Activated CD4-positive, alpha-beta memory T cell treated with anti-CD3 and anti-CD28 coated beads for 36 hours (primary cell): ENCODE measurements at regions of chr12 and their contacts with region 1.

Region 1: GRCh38 chr12:48851883-48852733 is at the start of gene DDX23:
- DNase-seq: peak; percentile 96
- H3K4me3 Mint-ChIP-seq: peak within 1 kb of the TSS; percentile 97
- H3K27ac Mint-ChIP-seq: peak within 1 kb of the TSS; percentile 97
- H3K4me1 Mint-ChIP-seq: peaks cover 31% of the 10 kb centered on the region
- H3K27me3 Mint-ChIP-seq: no peaks in the 10 kb centered on the region
- total RNA-seq, gene DDX23: 119 to 121 TPM

Region 2: DNA sequence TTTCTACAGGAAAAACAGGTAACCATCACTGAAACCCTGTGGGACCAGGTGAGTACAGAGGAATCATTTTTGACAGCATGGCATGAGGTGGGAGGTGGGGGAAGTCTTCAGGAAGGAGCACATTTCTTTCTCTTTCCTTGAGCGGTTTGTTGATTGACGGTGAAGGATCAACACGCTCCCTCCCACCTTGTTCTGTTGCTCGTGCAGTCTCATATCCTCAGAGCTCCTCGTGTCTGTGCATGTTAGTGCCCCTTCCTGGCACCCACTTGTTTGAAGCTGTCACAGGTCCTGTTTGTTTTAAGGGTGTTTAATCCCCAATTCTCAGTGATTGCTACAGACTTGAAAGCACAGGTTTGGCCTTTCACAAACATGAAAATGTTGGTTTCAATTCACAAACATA is 365.4 kb before region 1 on chr12:
- CTCF ChIA-PET with region 1: no interaction called
- POLR2A ChIA-PET with region 1: no interaction called
- intact Hi-C with region 1: no loop called
- DNase-seq: no peak
- H3K4me3 Mint-ChIP-seq: no peak overlapping the region
- H3K27ac Mint-ChIP-seq: no peak overlapping the region
- H3K4me1 Mint-ChIP-seq: no peaks in the 10 kb centered on the region
- H3K27me3 Mint-ChIP-seq: peaks cover 9% of the 10 kb centered on the region

Region 3: DNA sequence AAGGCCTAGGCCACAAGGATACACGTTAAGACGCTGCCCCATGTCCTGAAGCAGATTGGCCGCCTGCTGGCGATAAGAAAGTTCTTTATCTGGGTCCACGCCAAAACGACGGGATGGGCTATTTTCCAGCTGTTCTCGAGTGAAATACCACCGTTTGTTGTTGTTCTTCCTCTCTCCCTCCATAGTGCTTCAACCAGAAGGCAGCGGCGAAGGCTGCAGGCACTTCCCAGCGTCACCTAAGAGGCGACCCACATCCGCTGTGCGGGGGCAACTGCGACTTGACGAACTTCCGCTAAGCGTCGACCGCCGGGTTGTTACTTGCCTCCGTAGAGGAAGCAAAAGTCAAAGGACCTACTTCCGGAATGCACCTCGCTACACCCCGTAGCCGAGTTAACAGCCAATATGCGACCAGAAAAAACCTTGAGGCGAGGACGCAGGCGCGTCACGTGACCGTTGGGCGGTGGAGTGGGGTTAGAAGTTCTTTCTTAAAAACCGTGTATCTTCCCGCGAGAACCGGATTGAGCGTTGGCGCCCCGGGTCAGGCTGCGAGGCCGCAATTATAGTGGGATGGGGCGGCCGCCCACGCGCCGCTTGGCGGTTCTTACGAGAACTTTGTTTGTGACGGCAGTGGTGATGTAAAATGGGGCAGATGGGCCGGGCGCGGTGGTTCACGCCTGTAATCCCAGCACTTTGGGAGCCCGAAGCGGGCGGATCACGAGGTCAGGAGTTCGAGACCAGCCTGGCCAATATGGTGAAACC is 135.4 kb before region 1 on chr12 and contains the start of gene CCNT1:
- CTCF ChIA-PET with region 1: no interaction called
- POLR2A ChIA-PET with region 1: interaction called, 3 read pairs
- intact Hi-C with region 1: loop called (anchors 1 kb)
- DNase-seq: peak; percentile 100
- H3K4me3 Mint-ChIP-seq: peak within 1 kb of the TSS; percentile 98
- H3K27ac Mint-ChIP-seq: peak within 1 kb of the TSS; percentile 99
- H3K4me1 Mint-ChIP-seq: peaks cover 39% of the 10 kb centered on the region
- H3K27me3 Mint-ChIP-seq: no peaks in the 10 kb centered on the region
- total RNA-seq, gene CCNT1: 66.2 to 73.3 TPM

Region 4: GRCh38 chr12:48873096-48873495 is 21.0 kb after region 1 on chr12:
- CTCF ChIA-PET with region 1: interaction called, 106 read pairs
- POLR2A ChIA-PET with region 1: no interaction called
- intact Hi-C with region 1: no loop called
- DNase-seq: no peak
- H3K4me3 Mint-ChIP-seq: no peak overlapping the region
- H3K27ac Mint-ChIP-seq: no peak overlapping the region
- H3K4me1 Mint-ChIP-seq: no peaks in the 10 kb centered on the region
- H3K27me3 Mint-ChIP-seq: no peaks in the 10 kb centered on the region

Region 5: DNA sequence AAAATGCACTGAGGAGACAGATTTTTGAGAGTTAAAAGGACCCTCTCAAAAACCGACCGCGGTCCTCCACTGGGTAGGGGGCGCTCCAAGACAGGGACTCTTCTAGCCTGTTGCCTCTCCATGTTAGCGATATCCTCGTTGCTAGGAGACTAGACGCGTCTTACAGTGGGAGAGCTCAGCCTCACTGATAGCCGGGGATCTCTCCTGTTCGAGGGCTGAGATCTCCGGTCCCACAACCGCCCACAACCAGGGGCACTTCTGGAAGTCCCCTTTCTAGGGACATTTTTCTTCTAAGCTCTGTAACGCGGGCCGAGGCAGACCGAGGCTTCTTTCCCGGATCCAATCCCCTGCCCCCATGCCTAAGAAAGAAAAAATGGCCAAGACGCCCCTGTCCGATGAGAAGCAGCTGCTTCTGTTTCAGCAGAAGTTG is 51.9 kb after region 1 on chr12:
- CTCF ChIA-PET with region 1: interaction called, 68 read pairs
- POLR2A ChIA-PET with region 1: interaction called, 3 read pairs
- intact Hi-C with region 1: no loop called
- DNase-seq: peak; percentile 89
- H3K4me3 Mint-ChIP-seq: peak overlapping the region; percentile 70
- H3K27ac Mint-ChIP-seq: no peak overlapping the region
- H3K4me1 Mint-ChIP-seq: peaks cover 2% of the 10 kb centered on the region
- H3K27me3 Mint-ChIP-seq: no peaks in the 10 kb centered on the region

Region 6: DNA sequence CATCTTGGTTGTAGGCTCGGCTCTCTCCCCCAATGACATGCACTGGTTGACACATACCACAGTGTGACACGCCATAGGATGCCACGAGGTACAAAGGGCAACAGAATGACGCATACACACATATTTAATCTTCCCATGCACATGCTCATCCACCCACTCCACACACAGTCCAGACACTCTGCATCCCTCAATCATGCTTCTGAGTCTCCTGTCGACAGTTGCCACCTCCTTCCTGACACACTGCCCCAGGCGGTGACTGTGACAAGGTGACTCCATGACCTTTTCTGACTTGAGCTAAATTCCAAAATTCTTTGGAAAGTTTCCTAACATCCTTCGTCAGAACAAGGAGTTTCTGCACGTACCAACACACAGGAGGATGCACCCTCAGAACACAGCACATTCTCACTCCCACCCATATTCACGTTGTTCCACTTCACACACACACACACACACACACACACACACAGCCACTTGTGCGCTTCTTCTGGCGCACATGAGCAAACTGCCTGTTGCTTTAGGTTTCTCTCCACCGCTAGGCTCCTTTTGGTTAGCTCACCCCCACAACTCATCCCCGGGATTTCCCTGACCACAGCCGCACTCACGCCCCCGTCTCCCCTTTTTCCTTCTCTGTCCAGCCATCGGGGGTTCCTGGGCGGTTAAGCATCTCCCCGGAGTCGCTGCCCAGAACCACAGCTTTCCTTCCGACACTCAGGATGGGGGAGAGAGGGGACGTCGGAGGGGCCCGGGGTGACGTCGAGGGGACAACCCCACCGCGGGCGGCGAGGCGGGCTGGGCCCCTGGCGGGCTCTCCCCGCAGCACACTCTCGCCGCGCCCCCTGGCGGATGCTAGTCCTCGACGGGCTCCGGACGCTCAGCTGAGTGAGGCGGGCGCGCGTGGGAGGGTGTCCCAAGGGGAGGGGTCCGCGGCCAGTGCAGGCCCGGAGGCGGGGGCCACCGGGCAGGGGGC is 125.5 kb after region 1 on chr12:
- CTCF ChIA-PET with region 1: interaction called, 45 read pairs
- POLR2A ChIA-PET with region 1: interaction called, 7 read pairs
- intact Hi-C with region 1: loop called (anchors 1 kb)
- DNase-seq: peak; percentile 87
- H3K4me3 Mint-ChIP-seq: peak overlapping the region; percentile 59
- H3K27ac Mint-ChIP-seq: peak overlapping the region; percentile 70
- H3K4me1 Mint-ChIP-seq: peaks cover 55% of the 10 kb centered on the region
- H3K27me3 Mint-ChIP-seq: peaks cover 63% of the 10 kb centered on the region

Region 7: DNA sequence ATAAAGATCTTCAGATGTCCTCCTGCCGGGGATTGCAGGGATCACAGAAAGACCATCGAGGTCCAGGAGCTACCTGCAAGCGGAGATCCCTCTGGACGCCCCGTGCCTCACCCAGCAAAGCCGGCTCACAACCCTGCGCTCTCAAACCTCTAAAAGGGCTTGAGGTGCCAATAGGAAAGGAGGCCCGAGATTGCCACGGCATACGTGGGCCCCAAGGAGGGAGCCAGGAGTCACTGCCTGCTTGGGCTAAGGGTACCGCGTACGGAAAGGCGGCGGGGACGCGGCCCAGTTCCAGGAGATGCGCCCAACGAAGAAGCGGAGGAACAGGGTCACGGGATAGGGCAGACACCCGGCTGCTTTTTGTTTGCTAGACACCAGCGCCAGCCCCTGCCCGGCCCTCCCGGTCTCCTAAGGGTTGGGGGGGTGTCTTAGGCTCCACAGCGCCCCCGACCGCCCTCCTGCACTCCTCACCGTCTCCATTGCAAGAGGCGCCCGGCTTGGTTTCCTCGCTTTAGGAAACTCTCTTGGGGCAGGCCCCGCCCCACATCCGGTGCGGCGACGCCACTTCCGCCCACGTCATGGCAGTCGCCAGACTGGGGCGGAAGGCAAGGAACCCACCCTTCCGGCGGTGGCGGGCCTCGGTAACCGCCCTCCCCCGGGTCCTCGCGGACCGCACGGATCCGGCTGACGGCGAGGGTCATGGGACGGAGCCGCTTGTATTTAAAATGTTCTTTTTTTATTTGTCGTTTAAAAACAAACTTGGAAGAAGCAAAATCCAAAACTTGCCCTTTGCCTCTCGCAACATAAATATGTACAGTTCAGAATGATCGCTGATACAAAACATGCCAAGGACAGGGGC is 166.4 kb after region 1 on chr12 and contains the start of gene PRKAG1:
- CTCF ChIA-PET with region 1: interaction called, 10 read pairs
- POLR2A ChIA-PET with region 1: interaction called, 5 read pairs
- intact Hi-C with region 1: loop called (anchors 1 kb)
- DNase-seq: peak; percentile 97
- H3K4me3 Mint-ChIP-seq: peak within 1 kb of the TSS; percentile 95
- H3K27ac Mint-ChIP-seq: peak within 1 kb of the TSS; percentile 92
- H3K4me1 Mint-ChIP-seq: peaks cover 40% of the 10 kb centered on the region
- H3K27me3 Mint-ChIP-seq: no peaks in the 10 kb centered on the region
- total RNA-seq, gene PRKAG1: 52.0 to 55.8 TPM

Region 8: GRCh38 chr12:49212572-49212971 is 360.5 kb after region 1 on chr12:
- CTCF ChIA-PET with region 1: no interaction called
- POLR2A ChIA-PET with region 1: no interaction called
- intact Hi-C with region 1: no loop called
- DNase-seq: no peak
- H3K4me3 Mint-ChIP-seq: no peak overlapping the region
- H3K27ac Mint-ChIP-seq: no peak overlapping the region
- H3K4me1 Mint-ChIP-seq: no peaks in the 10 kb centered on the region
- H3K27me3 Mint-ChIP-seq: no peaks in the 10 kb centered on the region

Region 9: DNA sequence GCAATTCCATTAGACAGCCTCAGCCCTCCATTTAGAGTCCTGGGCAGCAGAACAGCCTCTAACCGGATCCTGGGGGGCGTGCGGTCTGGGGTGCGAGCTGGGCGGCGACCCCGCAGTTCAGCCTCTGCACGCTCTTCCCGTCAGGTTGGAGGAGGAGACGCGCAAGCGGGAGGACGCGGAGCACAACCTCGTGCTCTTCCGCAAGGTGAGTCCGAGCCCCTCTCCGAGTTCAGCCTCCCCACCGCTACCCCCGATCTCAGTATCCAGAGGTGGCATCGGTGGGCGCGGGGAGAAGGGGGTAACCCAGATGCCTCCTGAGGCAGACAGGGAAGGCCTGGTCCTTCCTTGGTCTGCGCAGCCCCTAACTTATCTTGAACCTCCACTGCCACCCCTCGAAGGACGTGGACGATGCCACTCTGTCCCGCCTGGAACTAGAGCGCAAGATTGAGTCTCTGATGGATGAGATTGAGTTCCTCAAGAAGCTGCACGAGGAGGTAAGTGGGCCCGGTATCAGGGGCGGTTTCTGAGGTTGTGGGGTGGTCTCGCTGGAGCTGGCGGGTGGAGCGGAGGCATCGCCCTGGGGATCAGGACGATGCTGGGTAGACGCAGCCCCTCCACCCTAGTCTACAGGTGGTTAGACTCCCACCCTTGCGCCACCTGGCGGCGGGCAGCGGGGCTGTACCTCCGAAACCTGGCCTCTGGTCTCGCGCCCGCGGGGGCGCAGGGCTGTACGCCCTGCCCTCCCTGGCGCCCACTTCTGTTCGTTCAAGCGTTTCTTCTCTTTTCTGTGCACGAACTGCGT is 444.1 kb after region 1 on chr12:
- CTCF ChIA-PET with region 1: no interaction called
- POLR2A ChIA-PET with region 1: no interaction called
- intact Hi-C with region 1: no loop called
- DNase-seq: peak; percentile 75
- H3K4me3 Mint-ChIP-seq: no peak overlapping the region
- H3K27ac Mint-ChIP-seq: no peak overlapping the region
- H3K4me1 Mint-ChIP-seq: peaks cover 12% of the 10 kb centered on the region
- H3K27me3 Mint-ChIP-seq: peaks cover 51% of the 10 kb centered on the region